ENCODE measurements at regions of chr6 and their contacts with region 1.

Region 1: DNA sequence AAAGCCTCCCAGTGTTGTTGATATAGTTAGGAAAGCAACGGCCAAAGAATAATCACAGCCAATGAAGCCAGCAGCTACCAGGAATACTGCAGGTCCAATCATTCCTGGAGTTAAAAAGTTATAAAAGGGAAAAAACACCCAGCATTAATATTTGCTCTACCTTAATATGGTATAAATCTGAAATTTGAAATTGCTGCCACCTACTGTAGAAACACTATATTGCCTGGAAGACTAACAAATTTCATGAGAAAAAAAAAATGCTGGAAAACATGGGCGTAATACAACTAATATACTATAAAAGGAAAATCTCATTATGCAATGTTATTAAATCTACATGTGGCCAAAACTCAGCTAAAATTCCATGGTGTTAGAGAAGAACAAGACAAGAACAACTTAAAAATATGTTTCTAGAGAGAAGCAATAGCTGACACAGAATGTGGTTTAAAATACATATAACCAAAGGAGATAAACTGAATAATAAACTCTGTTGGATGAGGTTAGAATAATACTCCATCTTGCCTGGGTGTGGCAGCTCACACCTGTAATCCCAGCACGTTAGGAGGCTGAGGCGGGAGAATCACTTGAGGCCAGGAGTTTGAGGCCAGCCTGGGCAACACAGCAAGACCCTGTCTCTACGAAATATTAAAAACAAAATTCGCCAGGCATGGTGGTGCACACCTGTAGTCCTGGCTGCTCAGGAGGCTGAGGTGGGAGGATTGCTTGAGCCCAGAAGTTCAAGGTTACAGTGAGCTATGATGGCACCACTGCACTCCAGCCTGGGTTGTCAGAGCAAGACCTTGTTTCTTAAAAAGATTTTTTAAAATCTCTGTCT is 43.1 kb downstream of the SLC17A5 start:
- DNase-seq: no peak
- H3K4me3 Mint-ChIP-seq: no peak overlapping the region
- H3K27ac Mint-ChIP-seq: no peak overlapping the region
- H3K4me1 Mint-ChIP-seq: peaks cover 6% of the 10 kb centered on the region
- H3K27me3 Mint-ChIP-seq: no peaks in the 10 kb centered on the region

Region 2: GRCh38 chr6:73515204-73515655 is 95.4 kb before region 1 on chr6:
- intact Hi-C with region 1: loop called (anchors 1 kb)
- DNase-seq: no peak
- H3K4me3 Mint-ChIP-seq: peak overlapping the region; percentile 88
- H3K27ac Mint-ChIP-seq: peak overlapping the region; percentile 82
- H3K4me1 Mint-ChIP-seq: peaks cover 34% of the 10 kb centered on the region
- H3K27me3 Mint-ChIP-seq: no peaks in the 10 kb centered on the region

Region 3: GRCh38 chr6:73585566-73586415 is 24.9 kb before region 1 on chr6:
- intact Hi-C with region 1: loop called (anchors 2 kb)
- DNase-seq: peak; percentile 29
- H3K4me3 Mint-ChIP-seq: peak overlapping the region; percentile 79
- H3K27ac Mint-ChIP-seq: peak overlapping the region; percentile 92
- H3K4me1 Mint-ChIP-seq: peaks cover 26% of the 10 kb centered on the region
- H3K27me3 Mint-ChIP-seq: no peaks in the 10 kb centered on the region

Region 4: DNA sequence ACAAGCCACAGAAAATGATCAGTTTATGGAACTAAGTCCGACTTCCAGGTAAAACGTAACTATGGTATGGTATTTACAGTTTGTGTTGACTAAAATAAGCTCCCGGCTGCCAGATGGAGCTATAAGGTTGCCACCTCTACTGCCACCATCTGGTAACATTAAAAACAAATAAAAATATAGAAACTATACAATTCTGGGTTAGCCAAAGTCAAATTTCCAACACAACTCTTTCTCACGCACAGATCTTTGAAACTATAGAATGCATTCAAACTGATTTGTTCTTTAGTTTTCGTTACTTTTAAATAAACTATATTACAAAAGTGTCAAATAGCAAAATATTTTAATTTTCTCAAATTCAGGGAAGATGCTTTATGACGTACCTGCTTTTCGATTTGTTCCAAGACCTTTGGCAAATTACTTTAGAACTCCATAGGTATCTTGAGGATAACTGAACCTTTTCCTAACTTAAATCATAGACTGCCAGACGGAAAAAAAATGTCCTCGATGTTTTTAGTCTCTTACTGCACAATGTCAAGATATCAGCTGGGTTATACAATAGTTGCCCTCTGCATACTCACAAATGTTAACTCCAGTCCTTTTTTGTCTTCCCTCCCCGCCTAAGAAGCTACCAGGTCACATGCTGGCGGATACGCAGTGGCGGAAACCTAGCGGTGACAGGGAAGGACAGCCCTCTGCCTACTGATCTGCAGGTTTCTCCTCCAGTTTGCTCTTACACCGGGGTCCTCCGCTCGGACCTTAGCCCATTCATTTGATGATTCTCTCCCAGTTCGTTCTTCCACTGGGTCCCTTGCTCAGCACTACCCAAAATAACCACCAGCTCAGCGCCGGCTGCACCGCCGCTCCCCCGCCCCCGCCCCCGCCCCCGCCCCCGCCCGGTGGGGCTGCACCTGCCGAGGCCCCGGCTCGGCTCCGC is 42.2 kb after region 1 on chr6:
- intact Hi-C with region 1: no loop called
- DNase-seq: peak; percentile 68
- H3K4me3 Mint-ChIP-seq: peak overlapping the region; percentile 88
- H3K27ac Mint-ChIP-seq: peak overlapping the region; percentile 89
- H3K4me1 Mint-ChIP-seq: peaks cover 25% of the 10 kb centered on the region
- H3K27me3 Mint-ChIP-seq: no peaks in the 10 kb centered on the region